Gastrocnemius medialis (tissue), 4 donors: ENCODE measurements at regions of chr10 and their contacts with region 1.

Region 1: DNA sequence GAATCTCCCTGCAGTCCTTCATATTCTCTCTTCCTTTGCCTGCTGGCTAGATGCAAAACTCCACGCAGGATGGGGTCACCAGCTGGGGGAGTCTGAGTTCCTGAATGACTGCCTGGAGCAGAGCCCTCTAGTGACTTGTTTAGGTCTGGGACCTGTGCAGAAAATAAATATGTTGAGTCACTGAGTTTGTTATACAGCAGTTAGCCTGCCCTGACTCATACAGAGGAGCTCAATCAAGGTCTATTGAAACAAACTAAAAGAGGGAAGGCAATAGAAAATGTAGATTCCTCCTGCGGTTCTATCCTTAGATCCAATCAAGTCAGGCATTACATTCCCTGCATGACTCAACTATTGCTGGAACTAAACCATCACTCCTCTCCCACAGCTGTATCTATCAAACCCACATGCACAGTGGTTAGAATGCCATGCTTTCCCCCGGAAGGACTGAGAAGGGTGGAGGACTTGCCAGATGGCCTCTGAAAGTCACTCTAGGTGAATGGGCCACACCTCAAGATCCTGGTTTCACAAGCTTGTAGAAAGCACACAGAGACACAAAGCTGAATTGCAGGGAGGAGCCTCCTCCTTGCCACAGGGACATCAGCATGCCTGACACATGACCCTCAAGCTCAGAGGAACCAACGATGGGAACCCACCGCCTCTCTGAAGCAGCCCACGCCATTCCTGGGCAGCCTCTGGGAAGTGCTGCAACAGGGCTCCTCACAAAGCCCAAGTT is 73.9 kb downstream of the SH3PXD2A start:
- DNase-seq: no peak
- ATAC-seq: peak in 1 of 2 donors; percentile 26
- H3K4me3 ChIP-seq: no peak overlapping the region
- H3K27ac ChIP-seq: peak overlapping the region in 3 of 4 donors; percentile 14 to 39 (median 23)
- H3K4me1 ChIP-seq: peaks cover 51 to 53% of the 10 kb centered on the region in 2 donors
- H3K27me3 ChIP-seq: no peaks in the 10 kb centered on the region
- CTCF ChIP-seq: peak in 1 of 5 experiments; percentile 25
- POLR2A ChIP-seq: no peak

Region 2: DNA sequence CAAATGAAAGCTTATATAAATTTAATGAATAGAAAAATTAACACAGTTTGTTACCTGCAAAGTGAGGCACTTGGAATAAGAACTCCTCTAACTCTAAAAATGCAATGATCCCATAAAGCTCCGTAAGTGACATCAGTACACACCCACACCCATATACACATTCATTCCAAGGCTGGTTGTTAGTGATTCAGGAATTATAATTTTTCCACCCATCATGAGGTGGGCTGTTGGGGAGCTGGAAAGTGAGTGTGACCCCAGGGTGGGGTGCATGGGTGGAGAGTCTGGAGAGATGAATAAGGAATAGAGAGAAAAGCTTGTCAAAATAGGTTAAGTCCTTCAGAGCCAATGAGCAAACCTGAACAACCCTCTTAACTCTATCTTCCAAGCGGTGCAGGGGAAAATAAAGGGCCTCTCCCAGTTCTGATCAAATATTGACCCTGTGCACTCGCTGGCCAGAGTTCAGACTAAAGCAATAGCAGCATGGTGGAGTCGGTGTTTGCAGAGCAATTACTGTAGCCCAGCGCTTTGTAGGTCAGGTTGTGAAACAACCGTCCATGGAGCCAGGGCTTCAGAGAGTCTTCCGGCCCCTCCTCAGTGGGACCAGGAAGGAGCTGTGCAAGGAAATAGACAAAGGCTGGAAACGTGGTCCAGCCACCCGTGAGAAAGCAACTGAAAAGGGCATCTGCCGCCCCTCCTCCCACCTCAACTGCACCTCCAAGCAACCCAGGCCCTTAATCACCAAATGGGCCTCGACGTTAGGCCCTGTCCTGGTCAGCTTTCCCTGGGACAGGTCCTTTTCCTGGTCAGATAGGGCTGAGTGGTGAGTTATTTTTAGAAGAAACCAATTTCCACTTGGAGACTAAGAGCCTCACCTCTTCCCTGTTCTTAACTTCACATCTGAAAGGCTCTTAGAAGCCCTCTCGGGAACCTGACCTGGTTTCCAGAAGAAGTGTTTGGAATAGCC is 12.7 kb after region 1 on chr10:
- in situ Hi-C with region 1: no loop called
- intact Hi-C with region 1: loop called (anchors 2 kb)
- DNase-seq: no peak
- ATAC-seq: peak in 1 of 2 donors; percentile 29
- H3K4me3 ChIP-seq: no peak overlapping the region
- H3K27ac ChIP-seq: peak overlapping the region in 3 of 4 donors; percentile 3 to 16 (median 7)
- H3K4me1 ChIP-seq: peaks cover 26 to 37% of the 10 kb centered on the region in 2 donors
- H3K27me3 ChIP-seq: no peaks in the 10 kb centered on the region
- CTCF ChIP-seq: no peak
- POLR2A ChIP-seq: no peak

Region 3: GRCh38 chr10:103835096-103836050 is 53.9 kb after region 1 on chr10:
- in situ Hi-C with region 1: no loop called
- intact Hi-C with region 1: no loop called
- DNase-seq: peak in 1 of 2 donors; percentile 58
- ATAC-seq: peak in 1 of 2 donors; percentile 22
- H3K4me3 ChIP-seq: no peak overlapping the region
- H3K27ac ChIP-seq: peak overlapping the region; percentile 36 to 57 (median 44)
- H3K4me1 ChIP-seq: peaks cover 69 to 73% of the 10 kb centered on the region in 2 donors
- H3K27me3 ChIP-seq: no peaks in the 10 kb centered on the region
- CTCF ChIP-seq: no peak
- POLR2A ChIP-seq: no peak